ENCODE measurements at regions of chrX and their contacts with region 1.

Region 1: GRCh38 chrX:119482481-119483480 is 14.5 kb downstream of the SLC25A5 start:
- DNase-seq: peak; percentile 70
- ATAC-seq: peak; percentile 94
- H3K4me3 Mint-ChIP-seq: peak overlapping the region; percentile 67
- H3K27ac Mint-ChIP-seq: peak overlapping the region; percentile 67
- H3K4me1 Mint-ChIP-seq: peaks cover 14% of the 10 kb centered on the region
- H3K27me3 Mint-ChIP-seq: no peaks in the 10 kb centered on the region

Region 2: GRCh38 chrX:119468930-119469635 is 13.7 kb before region 1 on chrX:
- CTCF ChIA-PET with region 1: interaction called, 17 read pairs
- POLR2A ChIA-PET with region 1: interaction called, 5 read pairs
- DNase-seq: peak; percentile 90
- ATAC-seq: peak; percentile 74
- H3K4me3 Mint-ChIP-seq: peak overlapping the region; percentile 87
- H3K27ac Mint-ChIP-seq: peak overlapping the region; percentile 94
- H3K4me1 Mint-ChIP-seq: peaks cover 19% of the 10 kb centered on the region
- H3K27me3 Mint-ChIP-seq: no peaks in the 10 kb centered on the region

Region 3: GRCh38 chrX:119495734-119496726 is 13.2 kb after region 1 on chrX:
- CTCF ChIA-PET with region 1: interaction called, 39 read pairs
- POLR2A ChIA-PET with region 1: no interaction called
- DNase-seq: no peak
- ATAC-seq: no peak
- H3K4me3 Mint-ChIP-seq: no peak overlapping the region
- H3K27ac Mint-ChIP-seq: no peak overlapping the region
- H3K4me1 Mint-ChIP-seq: peaks cover 10% of the 10 kb centered on the region
- H3K27me3 Mint-ChIP-seq: no peaks in the 10 kb centered on the region

Measured in activated CD8-positive, alpha-beta T cell treated with anti-CD3 and anti-CD28 coated beads, Interleukin-2, amount 10 ng/mL, durations not matched to agents 7 days and 5 days (primary cell).